ENCODE measurements at regions of chr15 and their contacts with region 1.

Region 1: DNA sequence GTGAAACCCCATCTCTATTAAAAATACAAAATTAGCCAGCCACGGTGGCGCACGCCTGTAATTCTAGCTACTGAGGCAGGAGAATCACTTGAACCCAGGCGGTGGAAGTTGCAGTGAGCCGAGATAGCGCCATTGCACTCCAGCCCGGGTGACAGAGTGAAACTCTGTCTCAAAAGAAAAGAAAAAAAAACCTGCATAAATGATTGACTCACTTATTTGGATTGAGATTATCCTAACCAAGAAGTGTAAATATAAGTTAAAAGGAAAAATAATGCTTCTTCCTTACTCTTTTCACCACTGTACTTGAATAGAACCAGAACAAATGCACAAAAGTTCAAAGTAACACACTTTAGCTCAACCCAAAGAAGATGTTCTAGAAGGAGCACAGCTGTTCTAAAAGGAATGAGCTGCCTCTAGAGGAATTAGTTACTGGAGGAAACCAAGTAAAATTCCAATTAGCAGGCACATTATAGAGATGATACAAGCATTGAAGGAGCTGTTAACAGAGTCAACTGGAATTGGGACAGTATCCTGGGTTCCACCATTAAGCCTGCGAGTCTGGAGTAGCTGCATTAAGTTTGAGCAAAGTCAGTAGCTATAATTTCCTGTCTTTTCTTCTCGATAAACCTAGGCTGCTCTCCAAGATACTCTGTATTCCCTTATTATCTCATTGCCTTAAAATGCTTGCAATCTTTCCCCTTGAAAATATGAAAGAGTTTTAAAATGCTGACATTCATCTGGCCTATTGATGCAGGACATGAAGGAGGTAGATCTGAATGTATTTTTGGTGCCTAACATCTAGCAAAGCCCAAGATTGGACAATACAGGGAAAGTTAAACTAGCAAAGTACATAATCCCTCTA is 9.5 kb downstream of the MTHFS start:
- DNase-seq: no peak
- H3K4me3 ChIP-seq: no peak overlapping the region
- H3K27ac ChIP-seq: no peak overlapping the region
- H3K4me1 ChIP-seq: no peaks in the 10 kb centered on the region
- H3K27me3 ChIP-seq: no peaks in the 10 kb centered on the region
- CTCF ChIP-seq: no peak
- POLR2A ChIP-seq: no peak

Region 2: GRCh38 chr15:78750566-78750965 is 1136.7 kb before region 1 on chr15:
- CTCF ChIA-PET with region 1: no interaction called
- POLR2A ChIA-PET with region 1: no interaction called
- dilution Hi-C with region 1: no loop called
- intact Hi-C with region 1: no loop called
- DNase-seq: no peak
- H3K4me3 ChIP-seq: peak overlapping the region in 1 of 3 experiments; percentile 10
- H3K27ac ChIP-seq: no peak overlapping the region
- H3K4me1 ChIP-seq: no peaks in the 10 kb centered on the region
- H3K27me3 ChIP-seq: no peaks in the 10 kb centered on the region
- CTCF ChIP-seq: no peak
- POLR2A ChIP-seq: no peak

Region 3: GRCh38 chr15:78988361-78988911 is 898.8 kb before region 1 on chr15:
- CTCF ChIA-PET with region 1: no interaction called
- POLR2A ChIA-PET with region 1: no interaction called
- dilution Hi-C with region 1: no loop called
- intact Hi-C with region 1: no loop called
- DNase-seq: peak; percentile 90
- H3K4me3 ChIP-seq: no peak overlapping the region
- H3K27ac ChIP-seq: no peak overlapping the region
- H3K4me1 ChIP-seq: peaks cover 12% of the 10 kb centered on the region
- H3K27me3 ChIP-seq: peaks cover 0 to 2% of the 10 kb centered on the region in 2 experiments
- CTCF ChIP-seq: no peak
- POLR2A ChIP-seq: no peak

Region 4: DNA sequence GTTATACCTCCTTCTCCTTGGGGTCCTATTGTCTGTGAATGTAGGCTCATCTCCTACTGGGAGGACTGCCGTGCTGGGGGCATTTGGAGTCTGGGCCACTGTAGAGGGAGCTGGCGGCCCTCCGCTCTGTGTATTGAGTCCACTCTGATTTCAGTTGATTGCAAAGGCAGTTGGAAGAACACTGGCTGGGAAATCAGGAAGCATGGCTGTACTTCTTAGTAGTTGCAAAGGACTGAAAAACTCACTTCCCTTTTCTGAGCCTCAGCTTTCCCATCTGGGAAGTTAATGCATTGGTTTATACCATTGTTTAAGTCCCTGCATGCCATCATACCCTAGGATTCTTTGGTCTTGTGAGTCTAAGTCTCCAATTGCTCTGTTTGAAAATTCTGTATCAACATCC is 529.7 kb before region 1 on chr15:
- CTCF ChIA-PET with region 1: no interaction called
- POLR2A ChIA-PET with region 1: no interaction called
- dilution Hi-C with region 1: no loop called
- intact Hi-C with region 1: no loop called
- DNase-seq: no peak
- H3K4me3 ChIP-seq: no peak overlapping the region
- H3K27ac ChIP-seq: no peak overlapping the region
- H3K4me1 ChIP-seq: no peaks in the 10 kb centered on the region
- H3K27me3 ChIP-seq: no peaks in the 10 kb centered on the region
- CTCF ChIP-seq: no peak
- POLR2A ChIP-seq: no peak

Region 5: GRCh38 chr15:79724312-79724711 is 163.0 kb before region 1 on chr15:
- CTCF ChIA-PET with region 1: no interaction called
- POLR2A ChIA-PET with region 1: no interaction called
- dilution Hi-C with region 1: no loop called
- intact Hi-C with region 1: no loop called
- DNase-seq: no peak
- H3K4me3 ChIP-seq: no peak overlapping the region
- H3K27ac ChIP-seq: no peak overlapping the region
- H3K4me1 ChIP-seq: no peaks in the 10 kb centered on the region
- H3K27me3 ChIP-seq: no peaks in the 10 kb centered on the region
- CTCF ChIP-seq: no peak
- POLR2A ChIP-seq: no peak

Region 6: DNA sequence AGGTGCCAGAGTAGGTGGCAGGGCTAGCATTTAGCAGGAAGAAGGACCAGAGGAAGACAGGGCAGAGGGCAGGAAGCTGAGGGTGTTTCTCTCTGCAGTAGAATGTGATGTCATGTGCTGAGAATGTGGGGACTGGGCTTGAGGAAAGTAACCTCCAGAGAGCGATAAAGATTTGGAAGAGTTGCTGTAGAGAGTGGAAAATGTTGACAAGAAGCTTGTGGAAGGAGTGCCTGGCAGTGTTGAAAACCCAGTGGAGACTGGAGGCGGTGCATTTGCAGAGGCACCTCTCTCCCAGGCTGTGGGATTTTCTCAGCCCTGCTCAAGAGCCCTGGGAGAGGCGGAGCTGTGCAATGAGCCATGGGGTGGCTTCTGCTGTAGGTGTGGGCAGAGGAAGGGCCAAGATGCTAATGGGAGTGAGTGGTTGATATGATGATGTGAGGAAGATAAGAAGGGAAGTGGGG is 1047.5 kb after region 1 on chr15:
- CTCF ChIA-PET with region 1: no interaction called
- POLR2A ChIA-PET with region 1: no interaction called
- dilution Hi-C with region 1: no loop called
- intact Hi-C with region 1: loop called (anchors 10 kb)
- DNase-seq: peak; percentile 63
- H3K4me3 ChIP-seq: no peak overlapping the region
- H3K27ac ChIP-seq: peak overlapping the region; percentile 63
- H3K4me1 ChIP-seq: peaks cover 18% of the 10 kb centered on the region
- H3K27me3 ChIP-seq: no peaks in the 10 kb centered on the region
- CTCF ChIP-seq: no peak
- POLR2A ChIP-seq: no peak